HEK293 (cell line): ENCODE measurements at regions of chr16 and their contacts with region 1.

Region 1: DNA sequence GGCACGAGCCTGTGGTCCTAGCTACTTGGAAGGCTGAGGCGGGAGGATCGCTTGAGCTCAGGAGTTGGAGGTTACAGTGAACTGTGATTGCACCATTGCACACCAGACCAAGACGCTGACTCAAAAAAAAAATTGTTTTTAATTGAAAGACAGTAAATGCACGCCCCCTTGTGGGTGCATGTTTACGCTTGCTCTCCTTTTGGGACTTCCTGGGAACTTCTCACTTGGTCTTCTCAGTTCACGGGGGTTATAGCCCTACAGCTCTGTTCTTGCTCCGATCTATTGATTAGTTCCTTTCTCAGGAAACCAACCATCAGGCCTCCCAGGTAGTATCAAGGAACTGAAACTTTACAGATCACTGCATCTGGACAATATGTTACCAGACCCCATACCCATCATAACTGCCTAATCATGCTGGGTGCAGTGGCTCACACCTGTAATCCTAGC is 14.2 kb upstream of the RIPOR1 start:
- H3K4me3 ChIP-seq: no peak overlapping the region
- H3K27ac ChIP-seq: no peak overlapping the region
- H3K4me1 ChIP-seq: no peaks in the 10 kb centered on the region
- CTCF ChIP-seq: no peak; the same call in 1 of the 2 replicates

Region 2: DNA sequence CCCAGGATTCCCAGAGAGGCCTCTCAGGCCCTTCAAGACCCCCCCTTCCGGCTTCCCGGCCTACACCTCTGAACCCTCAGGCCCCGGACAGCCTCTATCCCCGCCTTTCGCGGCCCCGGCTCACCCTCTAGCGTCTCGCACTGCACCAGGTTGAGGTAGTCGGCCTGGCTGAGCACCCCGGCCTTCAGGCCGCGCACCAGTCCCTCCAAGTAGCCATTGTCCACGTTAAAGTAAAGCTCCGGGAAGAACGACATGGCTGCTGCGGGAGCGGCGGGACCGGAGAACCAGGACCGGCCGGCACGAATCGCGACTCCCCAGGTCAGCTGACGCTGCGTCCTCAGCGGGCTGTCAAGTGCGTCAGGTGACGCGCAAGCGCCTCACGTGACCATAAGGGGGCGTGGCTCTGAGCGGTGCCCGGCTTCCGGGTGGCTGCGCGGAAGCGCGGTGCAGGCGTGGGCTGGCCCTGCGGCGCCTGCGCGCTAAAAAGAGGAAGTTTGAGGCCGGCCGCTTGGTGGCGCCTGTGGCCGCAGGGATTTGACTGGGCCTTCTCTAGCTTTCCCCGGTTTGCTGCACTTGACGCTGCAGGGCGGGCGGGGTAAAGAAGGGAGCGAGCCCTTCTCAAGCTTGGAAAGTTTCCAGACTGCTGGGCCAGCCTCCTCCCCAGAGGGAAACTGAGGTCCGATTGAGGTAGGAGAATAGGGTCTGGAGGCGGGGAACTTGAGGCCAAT is 33.4 kb before region 1 on chr16 and contains the start of gene ATP6V0D1:
- CTCF ChIA-PET with region 1: interaction called, 17 read pairs
- POLR2A ChIA-PET with region 1: interaction called, 3 read pairs
- H3K4me3 ChIP-seq: peak within 1 kb of the TSS; percentile 97
- H3K27ac ChIP-seq: peak within 1 kb of the TSS; percentile 18; the same call in 1 of the 2 replicates
- H3K4me1 ChIP-seq: no peaks in the 10 kb centered on the region
- CTCF ChIP-seq: peak; percentile 96

Region 3: GRCh38 chr16:67490335-67491096 is 23.9 kb before region 1 on chr16:
- CTCF ChIA-PET with region 1: interaction called, 92 read pairs
- POLR2A ChIA-PET with region 1: no interaction called
- H3K4me3 ChIP-seq: no peak overlapping the region
- H3K27ac ChIP-seq: no peak overlapping the region
- H3K4me1 ChIP-seq: no peaks in the 10 kb centered on the region
- CTCF ChIP-seq: no peak

Region 4: DNA sequence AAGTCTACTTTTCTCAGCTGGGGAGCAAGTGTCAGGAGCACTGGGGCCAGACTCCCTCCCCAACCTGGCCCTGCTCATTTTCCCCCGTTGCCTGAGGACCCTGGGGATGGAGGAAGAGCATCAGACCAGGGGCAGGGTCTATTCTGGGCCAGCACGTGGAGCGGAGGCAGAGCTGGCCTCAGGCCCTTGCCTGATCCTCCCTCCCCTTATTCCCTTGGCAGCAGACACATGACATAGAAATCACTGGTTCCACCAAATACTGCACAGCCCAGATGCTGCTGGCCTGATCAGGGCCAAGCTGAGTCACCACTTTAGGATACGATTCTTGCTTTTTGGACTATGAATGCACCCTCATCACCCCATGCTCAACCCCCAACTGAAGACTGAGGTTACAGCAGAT is 15.3 kb before region 1 on chr16:
- CTCF ChIA-PET with region 1: interaction called, 92 read pairs
- POLR2A ChIA-PET with region 1: no interaction called
- H3K4me3 ChIP-seq: no peak overlapping the region
- H3K27ac ChIP-seq: no peak overlapping the region
- H3K4me1 ChIP-seq: no peaks in the 10 kb centered on the region
- CTCF ChIP-seq: no peak